CD8-positive, alpha-beta T cell (primary cell): ENCODE measurements at regions of chr6 and their contacts with region 1.

Region 1: DNA sequence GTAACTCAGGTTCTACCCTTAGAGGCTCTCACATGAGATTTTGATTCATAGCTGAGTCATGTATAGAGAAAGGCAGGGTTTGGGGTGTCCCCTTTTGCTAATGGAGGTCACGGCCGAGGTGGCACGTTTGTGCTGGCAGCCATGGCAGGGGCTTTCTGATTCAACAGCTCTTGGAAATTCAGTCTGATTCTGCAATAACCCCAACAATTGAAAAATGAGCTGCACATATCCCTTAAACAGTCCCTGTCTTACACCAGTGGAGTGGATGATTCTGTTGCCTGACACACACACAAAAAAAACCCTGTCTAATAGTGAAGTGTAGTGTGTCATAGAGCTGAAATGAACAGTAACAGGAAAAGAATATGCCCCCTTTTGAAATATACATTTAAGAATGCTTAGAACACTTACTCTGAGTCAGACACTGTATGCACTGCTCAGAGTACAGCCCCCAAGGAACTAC is 40.4 kb upstream of the ARG1 start:
- DNase-seq: peak in 3 of 9 experiments; percentile 8 to 31 (median 12)
- ATAC-seq: peak; percentile 43
- H3K4me3 ChIP-seq: no peak overlapping the region
- H3K4me3 Mint-ChIP-seq: no peak overlapping the region
- H3K27ac ChIP-seq: no peak overlapping the region
- H3K27ac Mint-ChIP-seq: peak overlapping the region; percentile 83
- H3K4me1 ChIP-seq: peaks cover 39% of the 10 kb centered on the region
- H3K4me1 Mint-ChIP-seq: peaks cover 52% of the 10 kb centered on the region
- H3K27me3 ChIP-seq: no peaks in the 10 kb centered on the region
- H3K27me3 Mint-ChIP-seq: no peaks in the 10 kb centered on the region
- CTCF ChIP-seq: no peak

Region 2: DNA sequence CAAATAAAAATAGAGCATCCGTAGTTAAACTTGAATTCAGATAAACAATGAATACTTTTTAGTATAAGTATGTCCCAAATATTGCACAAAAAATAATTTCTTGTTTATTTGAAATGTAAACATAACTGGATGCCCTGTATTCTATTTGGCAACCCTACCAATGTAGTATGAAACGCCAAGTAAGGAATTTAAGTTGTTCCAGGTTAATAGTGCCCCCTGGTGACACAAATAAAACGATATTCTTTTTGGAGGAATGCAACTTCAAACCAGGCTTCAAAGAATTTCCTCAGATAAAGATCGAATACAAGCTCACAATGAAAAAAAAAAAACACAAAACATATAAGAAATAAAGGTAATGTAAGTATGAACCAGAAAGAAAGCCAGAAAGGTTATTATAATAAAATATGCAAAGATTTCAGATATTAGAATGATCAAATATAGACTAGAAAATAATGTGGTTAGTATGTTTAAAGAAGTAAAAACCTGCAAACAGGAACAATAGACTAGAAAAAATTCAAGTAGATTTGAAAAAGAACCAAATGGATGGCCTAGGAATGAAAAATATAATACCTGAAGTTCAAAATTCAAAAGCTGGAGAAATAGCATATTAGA is 415.8 kb before region 1 on chr6:
- CTCF ChIA-PET with region 1: interaction called, 14 read pairs
- POLR2A ChIA-PET with region 1: no interaction called
- intact Hi-C with region 1: loop called (anchors 1 to 5 kb)
- DNase-seq: peak in 3 of 9 experiments; percentile 7 to 64 (median 54)
- ATAC-seq: no peak
- H3K4me3 ChIP-seq: no peak overlapping the region
- H3K4me3 Mint-ChIP-seq: no peak overlapping the region
- H3K27ac ChIP-seq: no peak overlapping the region
- H3K27ac Mint-ChIP-seq: no peak overlapping the region
- H3K4me1 ChIP-seq: no peaks in the 10 kb centered on the region
- H3K4me1 Mint-ChIP-seq: no peaks in the 10 kb centered on the region
- H3K27me3 ChIP-seq: no peaks in the 10 kb centered on the region
- H3K27me3 Mint-ChIP-seq: no peaks in the 10 kb centered on the region
- CTCF ChIP-seq: peak; percentile 60

Region 3: DNA sequence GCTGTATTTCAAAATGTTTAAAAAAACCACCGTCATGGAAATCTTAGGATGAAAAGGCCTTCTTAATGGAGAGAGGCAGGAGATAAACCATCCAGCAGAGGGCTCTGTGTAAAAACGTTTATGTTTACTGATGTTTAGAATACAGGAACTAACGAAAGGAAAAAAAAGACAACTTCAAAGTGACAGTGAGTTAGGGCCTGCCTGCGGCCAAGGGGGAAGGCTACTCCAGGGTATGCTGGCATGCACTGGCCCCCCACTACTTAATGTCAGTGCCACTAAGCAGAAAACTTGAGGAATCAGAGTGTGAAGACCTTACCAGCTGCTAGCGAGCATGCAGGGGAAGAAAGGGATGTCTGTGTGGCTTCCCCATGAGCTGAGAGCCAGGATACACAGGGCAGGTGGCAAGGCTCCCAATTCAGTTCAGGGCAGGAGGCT is 349.6 kb before region 1 on chr6:
- CTCF ChIA-PET with region 1: interaction called, 81 read pairs
- POLR2A ChIA-PET with region 1: interaction called, 15 read pairs
- intact Hi-C with region 1: loop called (anchors 1 kb)
- DNase-seq: peak in 6 of 9 experiments; percentile 9 to 68 (median 40)
- ATAC-seq: peak; percentile 66
- H3K4me3 ChIP-seq: no peak overlapping the region
- H3K4me3 Mint-ChIP-seq: peak overlapping the region; percentile 69
- H3K27ac ChIP-seq: peak overlapping the region in 1 of 2 experiments; percentile 23
- H3K27ac Mint-ChIP-seq: peak overlapping the region; percentile 89
- H3K4me1 ChIP-seq: peaks cover 11% of the 10 kb centered on the region
- H3K4me1 Mint-ChIP-seq: peaks cover 13% of the 10 kb centered on the region
- H3K27me3 ChIP-seq: no peaks in the 10 kb centered on the region
- H3K27me3 Mint-ChIP-seq: no peaks in the 10 kb centered on the region
- CTCF ChIP-seq: peak; percentile 63

Region 4: GRCh38 chr6:131205481-131206244 is 326.9 kb before region 1 on chr6:
- CTCF ChIA-PET with region 1: interaction called, 26 read pairs
- POLR2A ChIA-PET with region 1: interaction called, 36 read pairs
- intact Hi-C with region 1: no loop called
- DNase-seq: peak in 1 of 9 experiments; percentile 26
- ATAC-seq: no peak
- H3K4me3 ChIP-seq: no peak overlapping the region
- H3K4me3 Mint-ChIP-seq: no peak overlapping the region
- H3K27ac ChIP-seq: no peak overlapping the region
- H3K27ac Mint-ChIP-seq: peak overlapping the region; percentile 66
- H3K4me1 ChIP-seq: peaks cover 46% of the 10 kb centered on the region
- H3K4me1 Mint-ChIP-seq: peaks cover 61% of the 10 kb centered on the region
- H3K27me3 ChIP-seq: no peaks in the 10 kb centered on the region
- H3K27me3 Mint-ChIP-seq: no peaks in the 10 kb centered on the region
- CTCF ChIP-seq: no peak

Region 5: DNA sequence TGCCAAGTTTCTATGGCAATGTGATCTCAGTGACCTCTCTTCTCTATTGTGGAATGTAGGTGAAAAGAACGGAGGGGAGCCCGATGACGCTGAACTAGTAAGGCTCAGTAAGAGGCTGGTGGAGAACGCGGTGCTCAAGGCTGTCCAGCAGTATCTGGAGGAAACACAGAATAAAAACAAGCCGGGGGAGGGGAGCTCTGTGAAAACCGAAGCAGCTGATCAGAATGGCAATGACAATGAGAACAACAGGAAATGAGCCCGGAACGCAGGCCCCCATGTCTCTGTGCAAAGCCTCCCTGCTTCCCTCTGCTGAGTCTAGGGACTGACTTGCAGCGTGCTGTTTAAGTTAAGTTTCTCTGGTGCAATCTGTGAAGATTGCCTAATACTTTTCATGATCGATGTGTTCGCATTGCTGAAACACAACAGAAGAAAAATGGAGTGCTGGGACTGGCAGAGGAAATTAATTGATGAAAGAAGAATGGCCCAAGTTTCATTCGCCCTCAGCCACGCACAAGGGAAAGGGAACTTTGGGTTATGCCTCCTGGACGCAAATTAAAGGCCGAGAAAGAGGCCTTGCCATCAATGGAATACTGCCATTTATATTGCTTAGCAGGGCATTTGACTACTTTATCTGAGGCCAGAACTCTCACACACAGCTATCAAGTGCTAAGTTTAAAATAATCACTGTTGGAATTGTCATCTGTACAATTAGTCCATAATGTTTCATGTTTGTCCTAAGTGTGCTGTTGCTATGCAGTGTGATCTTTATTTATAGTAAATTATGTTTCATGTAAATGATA is 250.9 kb before region 1 on chr6:
- CTCF ChIA-PET with region 1: interaction called, 6 read pairs
- POLR2A ChIA-PET with region 1: no interaction called
- intact Hi-C with region 1: loop called in 1 of 2 experiments (anchors 10 kb)
- DNase-seq: peak; percentile 46 to 88 (median 72)
- ATAC-seq: peak; percentile 97
- H3K4me3 ChIP-seq: peak overlapping the region; percentile 23 to 33
- H3K4me3 Mint-ChIP-seq: peak overlapping the region; percentile 77
- H3K27ac ChIP-seq: peak overlapping the region; percentile 74 to 78
- H3K27ac Mint-ChIP-seq: peak overlapping the region; percentile 97
- H3K4me1 ChIP-seq: peaks cover 48% of the 10 kb centered on the region
- H3K4me1 Mint-ChIP-seq: peaks cover 66% of the 10 kb centered on the region
- H3K27me3 ChIP-seq: no peaks in the 10 kb centered on the region
- H3K27me3 Mint-ChIP-seq: no peaks in the 10 kb centered on the region
- CTCF ChIP-seq: no peak

Region 6: DNA sequence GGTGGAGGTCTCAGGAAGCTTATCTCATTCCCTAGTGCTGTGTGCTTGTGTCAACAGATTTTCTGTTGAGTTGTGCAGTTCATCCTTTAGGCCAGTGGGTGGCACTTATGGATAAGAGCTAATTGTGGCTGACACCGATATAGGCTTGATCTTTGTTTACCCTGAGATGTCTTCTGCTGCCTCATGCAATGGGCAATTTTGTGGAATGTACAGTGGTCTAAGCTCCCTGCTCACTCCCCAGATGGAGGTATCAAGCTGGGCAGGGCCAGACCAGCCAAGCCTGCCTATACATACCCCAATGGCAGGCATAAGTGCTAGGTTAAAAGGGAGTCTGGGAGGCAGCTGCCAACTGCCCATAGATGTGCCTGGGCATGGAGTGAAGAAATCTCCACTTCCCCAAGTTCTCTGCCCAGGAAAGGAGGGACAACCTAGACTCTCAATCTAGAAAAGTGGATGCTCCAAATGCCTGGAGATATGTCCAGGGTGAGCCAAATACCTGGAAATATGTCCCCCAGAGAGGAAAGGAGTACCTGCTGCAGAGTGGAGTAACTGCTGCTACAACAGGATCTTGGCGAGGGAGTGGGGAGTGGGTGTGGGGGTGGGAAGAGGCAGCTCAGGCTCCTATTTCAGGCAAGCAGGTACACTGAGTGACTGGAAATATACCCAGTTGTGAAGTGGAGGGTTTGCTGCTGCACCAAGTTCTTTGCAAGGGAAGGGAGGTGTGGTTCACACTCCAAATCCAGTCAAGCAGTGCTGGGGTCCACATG is 12.8 kb before region 1 on chr6:
- CTCF ChIA-PET with region 1: interaction called, 55 read pairs
- POLR2A ChIA-PET with region 1: interaction called, 4 read pairs
- intact Hi-C with region 1: loop called (anchors 1 to 2 kb)
- DNase-seq: peak in 7 of 9 experiments; percentile 22 to 72 (median 48)
- ATAC-seq: peak; percentile 97
- H3K4me3 ChIP-seq: no peak overlapping the region
- H3K4me3 Mint-ChIP-seq: no peak overlapping the region
- H3K27ac ChIP-seq: no peak overlapping the region
- H3K27ac Mint-ChIP-seq: no peak overlapping the region
- H3K4me1 ChIP-seq: peaks cover 13% of the 10 kb centered on the region
- H3K4me1 Mint-ChIP-seq: peaks cover 17% of the 10 kb centered on the region
- H3K27me3 ChIP-seq: no peaks in the 10 kb centered on the region
- H3K27me3 Mint-ChIP-seq: no peaks in the 10 kb centered on the region
- CTCF ChIP-seq: peak; percentile 71

Region 7: DNA sequence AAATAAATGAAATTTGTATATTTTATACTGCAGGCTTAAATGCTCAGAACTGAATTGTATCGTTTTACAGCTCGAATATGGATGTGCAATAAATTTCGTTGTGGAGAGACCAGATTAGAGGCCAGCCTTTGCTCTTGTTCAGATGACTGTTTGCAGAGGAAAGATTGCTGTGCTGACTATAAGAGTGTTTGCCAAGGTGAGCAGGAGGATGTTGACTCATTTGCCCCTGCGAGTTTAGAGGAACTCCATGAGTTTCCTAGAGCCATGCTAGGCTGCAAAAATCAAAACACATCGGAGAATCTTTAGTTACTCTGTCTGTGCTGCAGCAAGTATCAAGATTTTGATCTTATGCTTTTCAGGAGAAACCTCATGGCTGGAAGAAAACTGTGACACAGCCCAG is 119.9 kb after region 1 on chr6:
- CTCF ChIA-PET with region 1: no interaction called
- POLR2A ChIA-PET with region 1: no interaction called
- intact Hi-C with region 1: no loop called
- DNase-seq: no peak
- ATAC-seq: no peak
- H3K4me3 ChIP-seq: no peak overlapping the region
- H3K4me3 Mint-ChIP-seq: no peak overlapping the region
- H3K27ac ChIP-seq: no peak overlapping the region
- H3K27ac Mint-ChIP-seq: no peak overlapping the region
- H3K4me1 ChIP-seq: no peaks in the 10 kb centered on the region
- H3K4me1 Mint-ChIP-seq: no peaks in the 10 kb centered on the region
- H3K27me3 ChIP-seq: no peaks in the 10 kb centered on the region
- H3K27me3 Mint-ChIP-seq: no peaks in the 10 kb centered on the region
- CTCF ChIP-seq: no peak

Region 8: GRCh38 chr6:131909408-131910218 is 377.0 kb after region 1 on chr6:
- CTCF ChIA-PET with region 1: no interaction called
- POLR2A ChIA-PET with region 1: no interaction called
- intact Hi-C with region 1: loop called in 1 of 2 experiments (anchors 10 kb)
- DNase-seq: peak; percentile 51 to 77 (median 71)
- ATAC-seq: peak; percentile 93
- H3K4me3 ChIP-seq: no peak overlapping the region
- H3K4me3 Mint-ChIP-seq: no peak overlapping the region
- H3K27ac ChIP-seq: no peak overlapping the region
- H3K27ac Mint-ChIP-seq: no peak overlapping the region
- H3K4me1 ChIP-seq: peaks cover 6% of the 10 kb centered on the region
- H3K4me1 Mint-ChIP-seq: peaks cover 7% of the 10 kb centered on the region
- H3K27me3 ChIP-seq: peaks cover 0 to 10% of the 10 kb centered on the region in 2 experiments
- H3K27me3 Mint-ChIP-seq: peaks cover 23% of the 10 kb centered on the region
- CTCF ChIP-seq: peak; percentile 82

Region 9: GRCh38 chr6:132969196-132969595 is 1436.6 kb after region 1 on chr6:
- CTCF ChIA-PET with region 1: no interaction called
- POLR2A ChIA-PET with region 1: no interaction called
- intact Hi-C with region 1: no loop called
- DNase-seq: no peak
- ATAC-seq: no peak
- H3K4me3 ChIP-seq: no peak overlapping the region
- H3K4me3 Mint-ChIP-seq: no peak overlapping the region
- H3K27ac ChIP-seq: no peak overlapping the region
- H3K27ac Mint-ChIP-seq: no peak overlapping the region
- H3K4me1 ChIP-seq: no peaks in the 10 kb centered on the region
- H3K4me1 Mint-ChIP-seq: no peaks in the 10 kb centered on the region
- H3K27me3 ChIP-seq: no peaks in the 10 kb centered on the region
- H3K27me3 Mint-ChIP-seq: peaks cover under 1% of the 10 kb centered on the region
- CTCF ChIP-seq: no peak